ENCODE measurements at regions of chr6 and their contacts with region 1.

Region 1: DNA sequence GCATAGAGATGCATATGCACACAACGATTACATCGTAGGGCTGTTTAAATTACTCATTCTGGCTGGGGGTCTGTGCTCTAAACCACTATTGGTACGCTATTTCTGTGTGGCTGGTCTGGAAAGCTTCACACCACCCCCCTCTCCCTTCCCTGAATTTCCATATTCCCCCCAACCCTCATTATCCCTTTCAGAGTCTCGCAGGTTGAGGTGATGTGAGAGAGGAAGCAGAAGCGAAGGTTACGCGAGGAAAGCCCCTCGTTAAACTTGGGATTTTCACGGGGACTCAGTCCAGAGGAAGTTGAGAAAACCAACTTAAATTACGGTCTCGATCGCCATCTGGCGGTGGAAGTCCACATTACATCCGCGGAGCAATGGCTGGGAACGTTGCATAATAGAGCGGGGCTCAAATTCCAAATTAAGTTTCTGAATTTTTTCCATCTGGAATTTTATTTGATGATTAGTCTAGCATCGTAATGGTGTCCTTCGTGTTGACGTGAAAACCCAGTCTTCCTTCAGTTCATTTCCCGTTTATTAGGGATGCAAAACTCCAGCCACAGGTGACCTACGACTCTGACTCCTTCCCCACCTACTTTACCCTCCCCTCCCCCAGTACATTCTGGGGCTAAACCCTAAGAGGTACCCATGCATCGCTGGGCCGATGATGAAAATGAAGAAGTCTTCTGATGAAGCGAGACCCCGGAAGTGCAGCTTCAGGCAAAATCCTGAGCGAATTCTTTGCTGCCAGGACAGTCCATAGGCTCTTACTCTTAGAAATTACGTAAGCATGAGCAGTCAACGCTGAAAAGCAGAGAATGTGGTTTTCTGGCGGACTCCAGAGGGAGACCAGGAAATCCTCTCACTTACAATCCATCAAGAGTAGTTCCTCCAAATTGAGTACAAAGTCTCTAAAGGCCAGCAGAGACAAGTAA is 19.7 kb downstream of the HLA-DOB start:
- DNase-seq: peak; percentile 73 to 78
- ATAC-seq: peak; percentile 71 to 90 (median 76)
- H3K4me3 ChIP-seq: peak overlapping the region in 4 of 10 donors; percentile 18 to 30 (median 26)
- H3K27ac ChIP-seq: peak overlapping the region in 1 of 10 donors; percentile 7
- H3K4me1 ChIP-seq: peaks cover 0 to 38% (median 3%) of the 10 kb centered on the region in 9 donors
- H3K27me3 ChIP-seq: peaks cover 0 to 91% (median 41%) of the 10 kb centered on the region in 7 donors
- CTCF ChIP-seq: peak; percentile 74 to 90 (median 86)

Region 2: DNA sequence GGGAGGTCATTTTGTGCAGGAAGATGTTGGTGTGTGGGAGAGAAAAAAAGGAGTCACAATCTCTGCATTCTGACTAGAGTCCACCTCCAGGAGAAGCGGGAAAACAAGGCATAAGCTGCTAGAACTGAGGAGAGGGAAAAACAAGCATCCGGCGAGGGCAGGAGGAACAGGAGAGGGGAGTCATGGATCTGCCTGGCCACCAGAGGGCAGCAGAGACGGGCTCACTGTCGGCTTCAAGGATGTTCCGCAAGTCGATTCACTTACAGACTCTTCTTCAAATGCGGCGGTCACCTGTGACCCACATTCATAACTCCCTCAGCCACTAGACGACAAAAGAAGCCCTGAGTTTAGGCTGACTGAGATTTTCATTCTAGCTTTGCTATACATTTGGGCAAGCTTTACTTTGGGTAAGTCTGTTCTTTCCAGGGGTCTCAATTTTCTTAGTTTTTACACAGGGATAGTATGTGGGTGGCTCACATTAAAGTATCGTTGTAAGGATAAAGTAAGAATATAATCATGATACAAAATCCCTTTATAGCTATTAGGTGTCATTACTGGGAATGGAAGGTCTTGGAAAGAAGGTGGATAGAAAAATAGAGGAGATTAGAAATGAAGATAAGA is 383.6 kb before region 1 on chr6:
- intact Hi-C with region 1: loop called (anchors 2 to 5 kb)
- DNase-seq: peak; percentile 72 to 84
- ATAC-seq: peak; percentile 57 to 90 (median 81)
- H3K4me3 ChIP-seq: no peak overlapping the region
- H3K27ac ChIP-seq: no peak overlapping the region
- H3K4me1 ChIP-seq: peaks cover 0 to 12% (median 4%) of the 10 kb centered on the region in 9 donors
- H3K27me3 ChIP-seq: peaks cover 0 to 74% (median 54%) of the 10 kb centered on the region in 7 donors
- CTCF ChIP-seq: peak; percentile 85 to 98 (median 96)

Region 3: DNA sequence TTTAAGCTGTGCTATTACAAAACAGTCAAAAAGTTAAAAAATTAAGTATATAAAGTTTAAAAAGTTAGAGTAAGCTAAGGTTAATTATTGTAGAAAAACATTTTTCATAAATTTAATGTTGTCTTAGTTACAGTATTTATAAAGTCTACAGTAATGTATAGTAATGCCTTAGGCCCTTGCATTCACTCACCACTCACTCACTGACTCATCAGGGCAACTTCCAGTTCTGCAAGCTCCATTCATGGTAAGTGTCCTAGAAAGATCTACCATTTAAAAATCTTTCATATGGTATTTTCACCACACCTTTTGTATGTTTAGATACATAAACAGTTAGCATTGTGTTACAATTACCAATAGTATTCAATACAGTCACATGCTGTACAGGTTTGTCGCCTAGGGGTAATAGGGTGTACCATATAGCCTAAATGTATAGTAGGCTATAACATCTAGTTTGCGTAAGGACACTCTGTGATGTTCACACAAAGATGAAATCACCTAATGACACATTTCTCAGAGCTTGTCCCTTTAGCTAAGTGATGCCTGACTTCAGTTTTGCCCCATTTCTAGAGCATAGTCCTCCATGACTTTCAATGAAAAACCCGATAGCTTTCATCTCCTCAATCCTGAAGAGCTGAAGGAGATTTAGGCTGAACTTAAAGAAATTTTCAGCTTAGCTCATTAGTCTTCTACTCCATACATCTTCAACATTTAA is 372.4 kb before region 1 on chr6:
- intact Hi-C with region 1: loop called in 2 of 10 experiments (anchors 5 kb)
- DNase-seq: no peak
- ATAC-seq: no peak
- H3K4me3 ChIP-seq: no peak overlapping the region
- H3K27ac ChIP-seq: no peak overlapping the region
- H3K4me1 ChIP-seq: no peaks in the 10 kb centered on the region
- H3K27me3 ChIP-seq: peaks cover 0 to 22% (median 14%) of the 10 kb centered on the region in 7 donors
- CTCF ChIP-seq: no peak

Region 4: DNA sequence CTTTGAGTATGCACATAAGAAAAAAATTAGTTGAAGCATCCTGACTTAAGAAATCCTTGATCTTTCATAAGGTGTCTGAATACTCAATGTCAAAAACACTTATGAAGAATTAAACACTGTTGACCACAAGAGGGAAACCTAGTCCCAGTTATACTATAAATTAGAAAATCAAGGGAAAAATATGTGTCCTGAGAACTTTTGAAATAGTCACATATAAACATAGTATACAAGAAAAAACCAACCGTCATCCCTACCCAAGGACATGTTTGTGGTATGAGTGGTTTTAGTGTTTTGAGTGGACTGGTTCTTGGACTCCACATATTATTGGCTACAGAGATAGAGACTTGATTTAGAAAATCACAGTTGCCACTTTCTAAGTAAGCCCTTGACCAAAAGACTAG is 365.1 kb before region 1 on chr6:
- intact Hi-C with region 1: loop called in 4 of 10 experiments (anchors 5 kb)
- DNase-seq: no peak
- ATAC-seq: no peak
- H3K4me3 ChIP-seq: no peak overlapping the region
- H3K27ac ChIP-seq: no peak overlapping the region
- H3K4me1 ChIP-seq: peaks cover 0 to 4% (median 0%) of the 10 kb centered on the region in 9 donors
- H3K27me3 ChIP-seq: peaks cover 0 to 8% (median 0%) of the 10 kb centered on the region in 7 donors
- CTCF ChIP-seq: peak in 8 of 9 donors; percentile 17 to 67 (median 60)

Region 5: DNA sequence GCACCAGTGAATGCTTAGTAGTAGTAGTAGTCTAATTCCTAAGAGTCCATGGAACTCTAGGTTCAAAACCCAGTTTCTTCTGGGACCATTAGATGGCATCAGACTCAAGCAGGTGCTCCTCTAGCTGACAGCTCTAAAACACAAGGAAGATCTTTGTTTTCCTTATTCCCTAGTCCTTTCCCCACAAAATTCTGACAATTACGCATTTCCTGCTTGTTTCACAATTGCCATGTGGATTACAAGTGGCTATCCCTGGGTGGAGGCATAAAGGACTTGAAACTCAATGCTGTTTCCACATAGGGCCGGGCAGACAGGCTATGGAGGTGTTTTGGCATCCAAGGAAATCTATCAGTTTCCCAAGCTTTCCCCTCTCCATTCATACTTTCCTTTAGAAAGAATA is 28.9 kb after region 1 on chr6:
- intact Hi-C with region 1: no loop called
- DNase-seq: no peak
- ATAC-seq: peak in 7 of 8 donors; percentile 34 to 89 (median 69)
- H3K4me3 ChIP-seq: no peak overlapping the region
- H3K27ac ChIP-seq: peak overlapping the region in 6 of 10 donors; percentile 0 to 57 (median 49)
- H3K4me1 ChIP-seq: peaks cover 0 to 22% (median 0%) of the 10 kb centered on the region in 9 donors
- H3K27me3 ChIP-seq: no peaks in the 10 kb centered on the region
- CTCF ChIP-seq: peak in 8 of 9 donors; percentile 24 to 62 (median 57)

Measured in heart right ventricle (tissue), 16 donors.